Naive thymus-derived CD4-positive, alpha-beta T cell (primary cell): ENCODE measurements at regions of chr1 and their contacts with region 1.

Region 1: GRCh38 chr1:89454845-89455521 is 69.6 kb upstream of the LRRC8B start:
- DNase-seq: peak in 8 of 9 donors; percentile 46 to 75 (median 66)
- ATAC-seq: peak; percentile 94
- H3K4me3 ChIP-seq: no peak overlapping the region
- H3K4me3 Mint-ChIP-seq: no peak overlapping the region
- H3K27ac ChIP-seq: no peak overlapping the region
- H3K27ac Mint-ChIP-seq: peak overlapping the region in 1 of 9 donors; percentile 38
- H3K4me1 ChIP-seq: no peaks in the 10 kb centered on the region
- H3K4me1 Mint-ChIP-seq: peaks cover 4 to 23% (median 9%) of the 10 kb centered on the region in 7 donors
- H3K27me3 ChIP-seq: no peaks in the 10 kb centered on the region
- H3K27me3 Mint-ChIP-seq: peaks cover under 1 to 45% (median 11%) of the 10 kb centered on the region in 5 donors

Region 2: DNA sequence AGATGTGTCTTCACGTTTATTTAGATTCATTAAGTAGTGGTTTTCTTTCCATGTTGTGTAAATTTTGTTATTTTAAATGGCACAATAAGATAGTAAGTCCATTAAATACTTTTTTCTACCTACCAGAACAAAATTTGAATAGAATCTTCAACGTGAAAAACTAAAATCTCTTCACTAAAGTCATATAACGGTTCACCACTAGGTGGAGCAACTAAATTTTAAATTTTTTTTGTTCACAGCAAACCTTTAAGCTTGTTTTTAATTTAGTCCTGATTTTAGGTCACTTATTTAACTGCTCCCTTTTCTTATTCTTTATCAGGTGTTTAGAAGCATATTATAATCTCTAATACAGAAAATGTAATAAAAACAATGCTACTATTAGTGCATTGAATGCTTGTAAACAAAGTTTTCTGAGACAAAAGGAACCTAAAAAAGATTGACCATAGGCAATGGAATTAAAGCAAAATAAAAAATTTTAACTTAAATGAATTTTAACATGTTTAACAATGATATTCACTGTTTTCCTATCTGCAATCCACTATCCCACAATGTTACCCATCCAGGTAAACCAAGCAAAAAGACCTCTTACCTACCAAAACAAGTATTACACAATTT is 799.2 kb before region 1 on chr1:
- CTCF ChIA-PET with region 1: interaction called, 4 read pairs
- POLR2A ChIA-PET with region 1: no interaction called
- intact Hi-C with region 1: loop called in 1 of 2 experiments (anchors 1 kb)
- DNase-seq: peak in 6 of 9 donors; percentile 5 to 49 (median 38)
- ATAC-seq: peak; percentile 34
- H3K4me3 ChIP-seq: no peak overlapping the region
- H3K4me3 Mint-ChIP-seq: no peak overlapping the region
- H3K27ac ChIP-seq: no peak overlapping the region
- H3K27ac Mint-ChIP-seq: no peak overlapping the region
- H3K4me1 ChIP-seq: no peaks in the 10 kb centered on the region
- H3K4me1 Mint-ChIP-seq: peaks cover 2 to 20% (median 16%) of the 10 kb centered on the region in 7 donors
- H3K27me3 ChIP-seq: no peaks in the 10 kb centered on the region
- H3K27me3 Mint-ChIP-seq: peaks cover 0 to 3% (median 0%) of the 10 kb centered on the region in 5 donors

Region 3: DNA sequence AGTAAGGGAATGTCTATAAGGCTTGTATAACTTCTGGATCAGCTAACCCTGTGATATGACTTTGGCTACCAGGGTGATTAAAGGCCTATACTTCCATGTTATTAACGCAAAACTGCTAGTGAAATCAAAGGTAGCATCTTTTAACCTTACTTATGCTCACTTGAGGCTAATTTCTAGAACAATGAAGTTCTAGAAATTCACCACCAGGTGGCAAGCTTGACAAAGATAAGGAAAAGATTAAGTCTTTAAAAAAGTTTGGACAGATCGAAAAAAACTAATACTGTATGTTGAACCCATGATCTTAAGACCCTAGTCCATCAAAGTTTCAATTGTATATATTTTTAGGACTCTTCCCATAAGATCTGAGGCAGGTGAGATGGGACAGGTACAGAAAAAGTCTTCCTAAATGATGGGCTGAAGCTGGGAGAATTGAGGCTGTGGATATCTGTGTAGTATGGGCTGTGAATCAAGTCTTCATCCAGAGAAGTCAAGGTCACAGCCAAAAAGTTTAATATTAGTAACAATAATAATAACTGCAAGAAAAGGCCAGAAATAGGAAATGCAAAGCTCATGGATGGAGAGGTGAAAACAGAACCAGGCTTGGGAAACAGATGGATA is 481.4 kb before region 1 on chr1:
- CTCF ChIA-PET with region 1: interaction called, 10 read pairs
- POLR2A ChIA-PET with region 1: no interaction called
- intact Hi-C with region 1: loop called (anchors 1 kb)
- DNase-seq: peak in 3 of 9 donors; percentile 11 to 34 (median 18)
- ATAC-seq: peak; percentile 47
- H3K4me3 ChIP-seq: no peak overlapping the region
- H3K4me3 Mint-ChIP-seq: no peak overlapping the region
- H3K27ac ChIP-seq: no peak overlapping the region
- H3K27ac Mint-ChIP-seq: peak overlapping the region in 1 of 9 donors; percentile 33
- H3K4me1 ChIP-seq: peaks cover 0 to 5% of the 10 kb centered on the region in 2 donors
- H3K4me1 Mint-ChIP-seq: peaks cover 15 to 39% (median 24%) of the 10 kb centered on the region in 7 donors
- H3K27me3 ChIP-seq: no peaks in the 10 kb centered on the region
- H3K27me3 Mint-ChIP-seq: no peaks in the 10 kb centered on the region

Region 4: GRCh38 chr1:88998716-88999115 is 456.3 kb before region 1 on chr1:
- CTCF ChIA-PET with region 1: interaction called, 10 read pairs
- POLR2A ChIA-PET with region 1: no interaction called
- intact Hi-C with region 1: loop called (anchors 1 kb)
- DNase-seq: peak in 7 of 9 donors; percentile 59 to 81 (median 76)
- ATAC-seq: peak; percentile 90
- H3K4me3 ChIP-seq: no peak overlapping the region
- H3K4me3 Mint-ChIP-seq: no peak overlapping the region
- H3K27ac ChIP-seq: no peak overlapping the region
- H3K27ac Mint-ChIP-seq: peak overlapping the region in 1 of 9 donors; percentile 68
- H3K4me1 ChIP-seq: peaks cover 12 to 19% of the 10 kb centered on the region in 2 donors
- H3K4me1 Mint-ChIP-seq: peaks cover 17 to 49% (median 34%) of the 10 kb centered on the region in 7 donors
- H3K27me3 ChIP-seq: no peaks in the 10 kb centered on the region
- H3K27me3 Mint-ChIP-seq: peaks cover 0 to 2% (median 0%) of the 10 kb centered on the region in 5 donors

Region 5: DNA sequence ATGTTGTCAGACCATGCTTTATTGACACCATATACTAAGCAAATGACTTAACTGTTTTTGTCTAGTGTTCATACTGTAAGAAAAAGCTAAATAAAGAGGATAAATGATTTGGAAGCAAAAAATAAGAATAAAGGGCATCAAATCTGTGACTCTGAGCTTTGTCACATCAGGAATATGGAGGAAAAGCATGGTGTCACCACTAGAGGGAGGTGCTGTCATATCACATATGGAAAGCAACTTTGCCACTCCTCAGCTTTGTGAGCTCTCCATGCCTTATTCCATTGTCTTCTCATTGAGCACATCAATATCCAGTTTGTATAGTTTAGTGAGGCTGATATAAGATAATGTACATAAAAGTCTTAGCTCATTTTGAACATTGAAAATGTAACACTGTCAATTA is 369.2 kb before region 1 on chr1:
- CTCF ChIA-PET with region 1: interaction called, 5 read pairs
- POLR2A ChIA-PET with region 1: no interaction called
- intact Hi-C with region 1: loop called (anchors 1 kb)
- DNase-seq: peak in 6 of 9 donors; percentile 30 to 69 (median 42)
- ATAC-seq: peak; percentile 84
- H3K4me3 ChIP-seq: no peak overlapping the region
- H3K4me3 Mint-ChIP-seq: no peak overlapping the region
- H3K27ac ChIP-seq: no peak overlapping the region
- H3K27ac Mint-ChIP-seq: no peak overlapping the region
- H3K4me1 ChIP-seq: no peaks in the 10 kb centered on the region
- H3K4me1 Mint-ChIP-seq: peaks cover 0 to 12% (median 0%) of the 10 kb centered on the region in 7 donors
- H3K27me3 ChIP-seq: no peaks in the 10 kb centered on the region
- H3K27me3 Mint-ChIP-seq: peaks cover 0 to 2% (median 0%) of the 10 kb centered on the region in 5 donors

Region 6: GRCh38 chr1:89261926-89262515 is 193.0 kb before region 1 on chr1:
- CTCF ChIA-PET with region 1: no interaction called
- POLR2A ChIA-PET with region 1: no interaction called
- intact Hi-C with region 1: loop called in 1 of 2 experiments (anchors 5 kb)
- DNase-seq: no peak
- ATAC-seq: no peak
- H3K4me3 ChIP-seq: peak overlapping the region; percentile 14
- H3K4me3 Mint-ChIP-seq: peak overlapping the region in 5 of 10 donors; percentile 12 to 91 (median 58)
- H3K27ac ChIP-seq: no peak overlapping the region
- H3K27ac Mint-ChIP-seq: peak overlapping the region in 8 of 9 donors; percentile 22 to 93 (median 56)
- H3K4me1 ChIP-seq: peaks cover 39 to 75% of the 10 kb centered on the region in 2 donors
- H3K4me1 Mint-ChIP-seq: peaks cover 49 to 76% (median 68%) of the 10 kb centered on the region in 7 donors
- H3K27me3 ChIP-seq: no peaks in the 10 kb centered on the region
- H3K27me3 Mint-ChIP-seq: no peaks in the 10 kb centered on the region

Region 7: GRCh38 chr1:89552471-89553081 is 97.6 kb after region 1 on chr1:
- CTCF ChIA-PET with region 1: no interaction called
- POLR2A ChIA-PET with region 1: no interaction called
- intact Hi-C with region 1: no loop called
- DNase-seq: peak in 3 of 9 donors; percentile 4 to 13 (median 12)
- ATAC-seq: peak; percentile 54
- H3K4me3 ChIP-seq: peak overlapping the region; percentile 40
- H3K4me3 Mint-ChIP-seq: peak overlapping the region in 9 of 10 donors; percentile 18 to 78 (median 56)
- H3K27ac ChIP-seq: no peak overlapping the region
- H3K27ac Mint-ChIP-seq: peak overlapping the region; percentile 7 to 77 (median 62)
- H3K4me1 ChIP-seq: peaks cover 0 to 12% of the 10 kb centered on the region in 2 donors
- H3K4me1 Mint-ChIP-seq: peaks cover 44 to 95% (median 76%) of the 10 kb centered on the region in 7 donors
- H3K27me3 ChIP-seq: no peaks in the 10 kb centered on the region
- H3K27me3 Mint-ChIP-seq: no peaks in the 10 kb centered on the region

Region 8: DNA sequence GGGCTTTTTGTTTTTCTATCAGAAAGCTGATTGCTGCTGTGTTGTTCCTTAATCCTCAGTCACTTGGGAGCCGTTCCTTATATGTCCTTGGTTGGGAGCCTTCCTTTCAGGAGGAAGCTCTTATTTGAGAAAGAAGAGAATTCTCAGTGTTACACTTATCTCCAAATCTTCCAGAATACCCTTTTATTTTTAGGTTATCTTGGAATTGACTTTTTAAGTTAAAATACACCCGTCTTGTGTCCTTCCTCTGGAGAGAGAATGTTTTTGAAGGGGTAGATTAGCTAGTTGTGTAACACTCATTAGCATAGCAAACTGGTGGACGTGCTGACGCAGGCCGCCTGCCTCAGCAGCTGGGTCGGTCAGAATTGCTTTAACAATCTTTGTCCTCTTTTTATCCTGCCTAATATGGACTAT is 111.8 kb after region 1 on chr1:
- CTCF ChIA-PET with region 1: no interaction called
- POLR2A ChIA-PET with region 1: no interaction called
- intact Hi-C with region 1: no loop called
- DNase-seq: no peak
- ATAC-seq: peak; percentile 46
- H3K4me3 ChIP-seq: no peak overlapping the region
- H3K4me3 Mint-ChIP-seq: no peak overlapping the region
- H3K27ac ChIP-seq: no peak overlapping the region
- H3K27ac Mint-ChIP-seq: peak overlapping the region in 3 of 9 donors; percentile 11 to 54 (median 53)
- H3K4me1 ChIP-seq: peaks cover 0 to 4% of the 10 kb centered on the region in 2 donors
- H3K4me1 Mint-ChIP-seq: peaks cover 22 to 70% (median 59%) of the 10 kb centered on the region in 7 donors
- H3K27me3 ChIP-seq: no peaks in the 10 kb centered on the region
- H3K27me3 Mint-ChIP-seq: no peaks in the 10 kb centered on the region